Caco-2 (cell line): ENCODE measurements at regions of chr2 and their contacts with region 1.

Region 1: DNA sequence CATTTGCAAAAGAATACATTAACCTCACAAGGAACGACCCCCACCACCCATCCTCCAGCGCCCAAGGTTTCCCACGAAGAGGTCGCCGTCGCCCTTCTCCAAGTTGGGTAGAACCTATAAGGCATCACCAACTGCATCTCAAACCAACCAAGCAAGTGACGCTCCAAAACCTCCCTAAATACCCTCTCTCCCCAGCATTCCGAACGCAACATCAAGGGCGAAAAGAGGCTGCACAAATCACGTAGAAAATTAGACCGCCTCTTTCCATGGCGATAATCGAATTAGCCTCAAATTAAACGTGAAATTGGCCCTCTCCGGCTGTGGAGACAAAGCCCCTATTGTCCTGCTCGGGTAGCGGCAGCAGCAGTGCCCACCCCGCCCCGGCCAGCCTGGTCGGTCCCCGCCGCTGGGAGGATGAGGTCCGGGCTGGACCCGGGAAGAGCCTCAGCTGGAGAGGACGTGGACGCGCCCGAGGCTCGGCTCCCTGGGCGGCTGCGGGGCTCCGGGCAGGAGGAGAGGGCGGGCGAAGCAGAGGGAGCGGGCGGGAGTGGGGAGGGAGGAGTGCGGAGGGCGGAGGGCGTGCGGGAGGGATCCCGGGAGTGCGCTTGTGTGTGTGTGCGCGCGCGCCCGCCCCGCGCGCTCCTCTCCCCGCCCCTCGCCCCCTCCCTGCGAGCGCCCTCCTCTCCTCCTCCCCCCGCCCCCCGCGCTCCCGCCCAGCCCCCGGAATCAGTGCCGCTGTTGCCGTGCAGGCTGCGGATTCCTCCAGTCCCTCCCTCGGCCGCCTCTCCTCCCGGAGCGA is at the start of gene SPTBN1:
- DNase-seq: peak; percentile 80 to 82
- H3K4me3 ChIP-seq: peak within 1 kb of the TSS; percentile 77
- H3K4me3 Mint-ChIP-seq: peak within 1 kb of the TSS; percentile 85
- H3K27ac Mint-ChIP-seq: peak within 1 kb of the TSS; percentile 31
- H3K4me1 ChIP-seq: peaks cover 12% of the 10 kb centered on the region; the same call in 1 of the 2 replicates
- H3K4me1 Mint-ChIP-seq: peaks cover 21% of the 10 kb centered on the region
- H3K27me3 ChIP-seq: no peaks in the 10 kb centered on the region
- H3K27me3 Mint-ChIP-seq: no peaks in the 10 kb centered on the region
- CTCF ChIP-seq: no peak
- total RNA-seq, gene SPTBN1: 361 and 383 TPM in 2 replicates

Region 2: GRCh38 chr2:54115284-54116137 is 340.3 kb before region 1 on chr2 and contains the start of gene ACYP2:
- CTCF ChIA-PET with region 1: no interaction called
- POLR2A ChIA-PET with region 1: no interaction called
- intact Hi-C with region 1: loop called (anchors 5 kb)
- DNase-seq: peak; percentile 97
- H3K4me3 ChIP-seq: peak within 1 kb of the TSS; percentile 68
- H3K4me3 Mint-ChIP-seq: peak within 1 kb of the TSS; percentile 99
- H3K27ac Mint-ChIP-seq: peak within 1 kb of the TSS; percentile 100
- H3K4me1 ChIP-seq: no peaks in the 10 kb centered on the region
- H3K4me1 Mint-ChIP-seq: no peaks in the 10 kb centered on the region
- H3K27me3 ChIP-seq: no peaks in the 10 kb centered on the region
- H3K27me3 Mint-ChIP-seq: no peaks in the 10 kb centered on the region
- CTCF ChIP-seq: peak in 1 of 2 experiments; percentile 21
- total RNA-seq, gene ACYP2: 4.1 and 5.4 TPM in 2 replicates

Region 3: GRCh38 chr2:54624591-54625071 is 168.9 kb after region 1 on chr2:
- CTCF ChIA-PET with region 1: no interaction called
- POLR2A ChIA-PET with region 1: no interaction called
- intact Hi-C with region 1: no loop called
- DNase-seq: no peak
- H3K4me3 ChIP-seq: no peak overlapping the region
- H3K4me3 Mint-ChIP-seq: no peak overlapping the region
- H3K27ac Mint-ChIP-seq: no peak overlapping the region
- H3K4me1 ChIP-seq: peaks cover 4% of the 10 kb centered on the region
- H3K4me1 Mint-ChIP-seq: peaks cover 23% of the 10 kb centered on the region
- H3K27me3 ChIP-seq: no peaks in the 10 kb centered on the region
- H3K27me3 Mint-ChIP-seq: no peaks in the 10 kb centered on the region
- CTCF ChIP-seq: no peak